Activated CD4-positive, alpha-beta T cell treated with anti-CD3 and anti-CD28 coated beads, Interleukin-2, amount 10 ng/mL, durations not matched to agents 24 days and 14 days (primary cell): ENCODE measurements at regions of chr3 and their contacts with region 1.

Region 1: DNA sequence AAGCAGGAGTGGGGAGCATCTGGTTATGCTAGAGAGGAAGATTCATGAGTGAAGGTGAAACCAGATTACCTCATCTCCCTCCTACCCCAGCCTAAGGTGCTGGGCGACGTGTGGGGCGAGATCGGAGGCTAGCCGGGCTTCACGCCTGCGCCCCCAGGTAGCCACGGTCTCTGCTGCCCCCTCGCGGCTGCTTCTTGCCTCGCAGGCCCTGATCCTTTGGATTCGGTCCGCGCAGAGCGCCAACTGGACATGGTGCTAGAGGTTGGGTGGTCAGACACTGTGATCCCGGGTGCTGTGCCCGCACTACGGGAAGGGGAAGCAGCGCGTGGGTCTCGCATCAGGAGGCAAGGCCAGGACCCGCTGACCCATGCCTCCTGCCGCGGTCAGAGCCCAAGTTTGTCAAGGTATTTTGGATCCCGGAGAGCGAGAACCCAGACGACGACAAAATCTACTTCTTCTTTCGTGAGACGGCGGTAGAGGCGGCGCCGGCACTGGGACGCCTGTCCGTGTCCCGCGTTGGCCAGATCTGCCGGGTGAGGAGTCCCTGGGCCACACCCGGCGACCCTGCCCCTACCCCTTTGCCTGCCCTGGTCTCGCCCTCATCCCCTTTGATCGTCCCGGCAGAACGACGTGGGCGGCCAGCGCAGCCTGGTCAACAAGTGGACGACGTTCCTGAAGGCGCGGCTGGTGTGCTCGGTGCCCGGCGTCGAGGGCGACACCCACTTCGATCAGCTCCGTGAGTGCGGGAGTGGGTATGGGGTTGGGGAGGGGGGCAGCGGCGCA is 4.2 kb downstream of the SEMA3B start:
- DNase-seq: peak; percentile 97
- H3K4me3 Mint-ChIP-seq: peak overlapping the region; percentile 86
- H3K27ac Mint-ChIP-seq: no peak overlapping the region
- H3K4me1 Mint-ChIP-seq: peaks cover 28% of the 10 kb centered on the region
- H3K27me3 Mint-ChIP-seq: peaks cover 39% of the 10 kb centered on the region

Region 2: GRCh38 chr3:50121416-50122032 is 151.6 kb before region 1 on chr3:
- intact Hi-C with region 1: loop called (anchors 1 kb)
- DNase-seq: peak; percentile 89
- H3K4me3 Mint-ChIP-seq: no peak overlapping the region
- H3K27ac Mint-ChIP-seq: no peak overlapping the region
- H3K4me1 Mint-ChIP-seq: no peaks in the 10 kb centered on the region
- H3K27me3 Mint-ChIP-seq: no peaks in the 10 kb centered on the region

Region 3: DNA sequence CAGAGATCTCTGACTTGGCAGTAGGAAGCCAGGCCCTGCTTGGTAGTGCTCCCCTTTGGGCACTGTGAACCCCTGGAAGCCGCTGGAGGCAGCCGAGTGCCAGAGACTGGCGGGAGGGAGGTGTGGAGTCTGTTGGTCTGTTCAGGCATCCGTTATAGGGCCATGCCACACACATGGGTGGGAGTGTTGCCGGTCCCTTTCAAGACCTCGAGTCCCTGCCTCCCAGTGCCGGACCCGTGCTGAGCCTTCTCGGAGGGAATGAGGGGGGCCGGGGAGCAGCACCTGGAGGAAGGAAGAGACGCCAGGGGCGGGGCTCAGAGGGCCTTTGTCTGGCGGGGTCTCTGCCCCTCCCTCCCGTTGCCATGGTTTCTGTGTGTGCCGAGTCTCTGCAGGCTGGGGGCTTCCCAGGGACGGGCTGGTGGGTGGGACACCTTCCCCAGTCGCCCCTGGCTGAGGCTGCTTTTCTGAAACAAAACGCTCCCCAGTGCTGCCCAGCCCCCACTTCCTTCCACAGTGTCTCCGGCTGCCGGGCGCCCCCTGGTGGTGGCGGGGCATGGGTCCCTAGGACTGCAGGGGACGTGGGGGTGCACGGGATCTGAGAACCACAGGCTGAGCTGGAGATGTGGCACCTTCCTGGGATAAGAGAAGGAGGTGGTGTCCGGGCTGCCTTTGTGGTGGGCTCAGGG is 27.1 kb before region 1 on chr3:
- intact Hi-C with region 1: loop called (anchors 1 kb)
- DNase-seq: peak; percentile 98
- H3K4me3 Mint-ChIP-seq: peak overlapping the region; percentile 86
- H3K27ac Mint-ChIP-seq: peak overlapping the region; percentile 92
- H3K4me1 Mint-ChIP-seq: peaks cover 57% of the 10 kb centered on the region
- H3K27me3 Mint-ChIP-seq: no peaks in the 10 kb centered on the region

Region 4: DNA sequence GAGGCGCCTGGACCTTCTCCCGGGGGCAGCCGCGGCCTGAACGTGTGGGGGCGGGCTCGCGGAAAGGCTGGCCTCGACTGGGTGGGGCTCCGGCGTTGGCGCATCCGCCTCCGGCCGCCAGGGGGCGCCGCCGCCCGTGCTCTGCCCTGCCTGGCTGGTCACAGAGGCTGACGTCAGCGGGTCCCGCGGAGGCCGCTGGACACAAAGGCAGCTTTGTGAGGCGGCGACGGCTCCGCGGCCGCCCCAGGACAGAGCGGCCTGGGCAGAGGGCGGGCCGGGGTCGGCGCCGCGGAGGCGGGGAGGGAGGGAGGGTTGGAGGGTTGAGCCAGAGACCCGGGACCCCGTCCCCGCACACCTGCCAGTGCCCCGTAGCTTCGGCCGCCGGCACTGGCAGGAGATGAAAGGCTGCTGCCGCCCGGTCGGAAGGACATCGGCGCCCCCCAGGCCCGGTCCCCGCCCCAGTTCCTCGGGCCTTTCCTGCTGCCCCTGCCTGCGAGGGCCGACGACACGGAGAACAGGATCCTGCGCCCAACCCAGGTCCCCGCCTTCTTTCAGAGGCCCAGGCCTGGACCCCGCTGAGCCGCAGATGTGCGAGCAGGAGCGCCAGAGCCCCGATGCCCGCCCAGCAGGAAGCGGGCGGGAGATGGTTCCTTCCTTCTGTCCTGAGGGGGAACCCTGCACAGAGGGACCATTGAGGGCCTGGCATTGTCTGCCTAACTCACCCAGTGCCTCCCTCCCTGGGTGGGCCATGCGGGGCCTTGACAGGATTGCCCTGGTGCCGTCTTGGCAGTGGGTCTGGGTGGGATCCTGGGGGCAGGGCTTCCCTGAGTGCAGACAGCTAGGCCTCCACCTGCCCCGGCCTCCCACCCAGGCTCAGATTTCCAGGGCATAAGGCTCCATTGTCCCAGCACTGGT is 12.8 kb before region 1 on chr3:
- intact Hi-C with region 1: loop called (anchors 1 kb)
- DNase-seq: peak; percentile 97
- H3K4me3 Mint-ChIP-seq: peak overlapping the region; percentile 71
- H3K27ac Mint-ChIP-seq: peak overlapping the region; percentile 81
- H3K4me1 Mint-ChIP-seq: peaks cover 5% of the 10 kb centered on the region
- H3K27me3 Mint-ChIP-seq: no peaks in the 10 kb centered on the region